ENCODE measurements at regions of chr11 and their contacts with region 1.

Region 1: GRCh38 chr11:57345555-57346211 is 7.5 kb downstream of the P2RX3 start:
- DNase-seq: peak; percentile 76
- H3K4me3 Mint-ChIP-seq: no peak overlapping the region
- H3K27ac Mint-ChIP-seq: no peak overlapping the region
- H3K4me1 Mint-ChIP-seq: peaks cover 2% of the 10 kb centered on the region
- H3K27me3 Mint-ChIP-seq: peaks cover 2% of the 10 kb centered on the region

Region 2: DNA sequence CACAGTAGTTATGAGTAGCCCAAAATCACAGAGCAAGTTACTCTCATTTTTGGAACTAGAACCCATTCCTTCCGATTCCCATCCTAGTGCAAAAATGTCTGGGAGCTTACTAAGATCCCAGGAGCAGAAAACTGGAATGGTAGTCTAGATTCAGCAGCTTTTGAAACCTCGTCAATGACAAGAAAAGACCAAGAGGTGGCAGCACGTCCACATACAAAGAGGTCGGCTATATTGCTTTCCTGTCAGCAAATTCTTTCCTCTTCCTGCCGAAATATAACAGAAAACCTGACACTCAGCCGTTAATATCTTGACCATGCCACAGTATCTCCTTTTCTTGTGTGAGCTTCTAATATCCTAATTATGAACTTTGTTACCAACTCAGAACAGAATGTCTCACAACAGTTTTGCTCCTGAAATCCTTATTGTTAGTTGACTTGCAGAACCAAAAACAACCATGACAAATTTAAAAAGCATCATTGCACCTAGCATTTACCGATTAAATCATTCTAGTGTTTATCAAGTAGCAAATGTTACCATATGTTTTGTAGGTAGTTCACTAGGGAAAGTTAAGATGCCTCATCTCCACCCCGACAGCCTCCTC is 504.4 kb before region 1 on chr11:
- CTCF ChIA-PET with region 1: interaction called, 4 read pairs
- POLR2A ChIA-PET with region 1: no interaction called
- intact Hi-C with region 1: loop called (anchors 10 kb)
- DNase-seq: peak; percentile 39
- H3K4me3 Mint-ChIP-seq: no peak overlapping the region
- H3K27ac Mint-ChIP-seq: no peak overlapping the region
- H3K4me1 Mint-ChIP-seq: peaks cover 2% of the 10 kb centered on the region
- H3K27me3 Mint-ChIP-seq: peaks cover 4% of the 10 kb centered on the region

Region 3: DNA sequence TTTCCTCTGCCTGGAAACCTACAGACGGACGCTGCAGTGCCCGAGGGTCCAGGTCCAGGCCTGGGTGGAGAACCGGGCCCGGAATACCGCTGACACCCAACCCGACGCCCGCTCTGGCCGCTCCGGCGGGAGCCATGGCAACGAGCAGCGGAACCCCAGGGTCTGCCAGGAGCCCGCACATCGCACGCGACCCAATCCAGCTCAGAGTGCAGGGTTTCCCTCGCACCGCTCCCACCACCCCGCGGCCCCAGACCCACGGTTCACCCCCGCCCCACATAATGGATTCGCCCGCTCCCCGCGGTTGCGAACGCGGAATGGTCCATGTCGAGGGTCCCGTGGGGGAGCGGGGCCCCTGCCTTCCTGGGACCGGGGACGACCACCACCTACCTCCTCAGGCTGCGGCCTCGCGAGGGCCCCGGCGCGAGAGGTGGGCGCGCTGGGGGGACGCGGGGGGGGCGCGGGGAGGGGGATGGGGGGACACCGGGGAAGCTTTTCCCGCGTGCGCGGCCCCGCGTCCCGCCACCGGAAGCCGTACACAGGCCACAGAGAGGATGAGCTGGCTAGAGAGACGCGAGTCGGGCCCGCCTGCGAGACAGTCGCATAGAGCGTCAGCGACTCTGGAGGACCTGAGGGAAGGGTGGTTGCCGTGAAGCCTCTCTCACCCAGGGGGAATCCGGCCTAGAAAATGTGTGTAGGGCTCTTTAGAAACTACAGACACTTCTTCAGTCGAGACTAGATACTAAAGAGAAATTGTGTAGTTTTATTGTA is 10.2 kb before region 1 on chr11 and contains the start of gene SSRP1:
- CTCF ChIA-PET with region 1: interaction called, 17 read pairs
- POLR2A ChIA-PET with region 1: no interaction called
- intact Hi-C with region 1: no loop called
- DNase-seq: peak; percentile 92
- H3K4me3 Mint-ChIP-seq: peak within 1 kb of the TSS; percentile 91
- H3K27ac Mint-ChIP-seq: peak within 1 kb of the TSS; percentile 98
- H3K4me1 Mint-ChIP-seq: peaks cover 47% of the 10 kb centered on the region
- H3K27me3 Mint-ChIP-seq: no peaks in the 10 kb centered on the region
- total RNA-seq, gene SSRP1: 256 to 262 TPM

Region 4: DNA sequence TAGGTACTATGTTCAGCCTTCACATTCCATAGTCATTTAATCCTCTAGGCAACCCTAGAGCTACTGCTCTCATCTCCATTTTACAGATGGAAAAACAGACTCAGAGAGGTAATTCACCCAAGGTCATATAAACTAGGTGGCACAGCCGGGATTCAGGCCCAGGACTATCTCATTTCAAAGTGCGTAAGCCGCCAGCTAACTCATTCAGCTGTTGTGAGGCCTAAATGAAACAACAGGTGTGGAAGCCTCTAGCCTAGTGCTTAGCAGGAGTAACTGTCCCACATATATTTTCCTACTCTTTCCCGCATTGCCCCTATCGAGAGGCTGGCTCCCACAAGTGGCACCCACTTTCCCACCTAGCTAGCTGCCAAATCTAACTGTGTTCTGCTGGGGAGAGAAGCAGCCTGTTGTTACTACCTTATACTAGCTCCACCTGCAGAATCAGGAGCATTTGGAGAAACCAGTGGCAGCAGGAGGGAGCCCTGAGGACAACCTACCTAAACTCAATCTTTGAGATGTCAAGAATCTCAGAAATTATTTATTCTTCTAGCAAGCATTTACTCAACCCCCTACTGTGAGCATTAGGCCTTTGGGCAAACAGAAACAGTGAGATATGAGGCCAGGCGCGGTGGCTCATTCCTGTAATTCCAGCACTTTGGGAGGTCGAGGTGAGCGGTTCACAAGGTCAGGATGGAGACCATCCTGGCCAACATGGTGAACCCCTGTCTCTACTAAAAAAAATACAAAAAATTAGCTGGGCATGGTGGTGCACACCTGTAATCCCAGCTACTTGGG is 14.4 kb after region 1 on chr11:
- CTCF ChIA-PET with region 1: interaction called, 11 read pairs
- POLR2A ChIA-PET with region 1: no interaction called
- intact Hi-C with region 1: no loop called
- DNase-seq: no peak
- H3K4me3 Mint-ChIP-seq: no peak overlapping the region
- H3K27ac Mint-ChIP-seq: no peak overlapping the region
- H3K4me1 Mint-ChIP-seq: no peaks in the 10 kb centered on the region
- H3K27me3 Mint-ChIP-seq: peaks cover 11% of the 10 kb centered on the region

Region 5: GRCh38 chr11:57480409-57481137 is 134.9 kb after region 1 on chr11:
- CTCF ChIA-PET with region 1: interaction called, 43 read pairs
- POLR2A ChIA-PET with region 1: no interaction called
- intact Hi-C with region 1: loop called (anchors 1 kb)
- DNase-seq: peak; percentile 87
- H3K4me3 Mint-ChIP-seq: no peak overlapping the region
- H3K27ac Mint-ChIP-seq: no peak overlapping the region
- H3K4me1 Mint-ChIP-seq: peaks cover 13% of the 10 kb centered on the region
- H3K27me3 Mint-ChIP-seq: peaks cover 17% of the 10 kb centered on the region

Region 6: DNA sequence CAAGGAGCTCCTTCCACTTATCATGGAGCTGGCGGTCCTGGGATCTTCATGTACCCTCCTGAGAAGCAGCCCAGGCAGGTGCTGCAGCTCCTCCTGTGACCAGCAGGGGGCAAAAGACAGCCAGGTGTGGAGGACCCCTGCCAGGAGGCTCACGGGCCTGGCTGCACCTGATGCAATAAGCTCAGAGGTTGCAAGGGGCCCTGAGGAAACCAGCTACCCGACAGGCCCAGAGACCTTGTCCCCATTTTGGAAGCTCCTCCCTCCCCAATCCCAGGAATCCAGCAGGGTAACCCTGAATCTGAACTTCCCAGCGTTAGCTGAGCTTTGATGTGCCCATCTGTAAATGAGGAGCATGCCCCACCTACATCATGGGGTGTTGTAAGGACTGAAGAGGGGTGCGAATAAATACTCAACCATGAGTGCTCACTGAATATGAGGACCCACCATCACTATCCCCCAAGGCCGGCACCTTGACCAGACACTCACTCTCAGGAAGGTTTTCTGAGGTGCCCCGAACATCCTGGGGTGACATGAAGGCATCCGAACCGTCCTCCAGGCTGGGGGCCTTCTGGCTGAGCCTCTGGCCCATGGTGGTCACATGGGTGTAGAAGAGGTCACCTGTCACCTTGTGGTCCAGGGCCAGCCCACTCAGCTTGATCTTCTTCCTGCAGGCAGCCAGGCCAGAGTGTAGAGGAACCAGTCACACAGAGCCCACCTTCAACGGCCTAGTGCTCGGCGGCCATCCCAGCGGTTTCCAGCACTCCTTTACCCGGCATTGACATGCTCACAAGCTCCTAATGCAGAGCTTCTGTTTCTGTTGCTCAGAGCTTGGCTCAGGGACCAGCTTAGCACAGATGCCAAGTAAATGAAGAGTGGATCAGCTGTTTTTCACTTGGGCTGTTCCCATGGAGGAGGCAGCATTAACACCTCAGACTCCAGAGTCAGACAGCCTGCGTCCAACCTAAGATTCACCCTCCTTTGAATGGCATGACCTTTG is 148.1 kb after region 1 on chr11:
- CTCF ChIA-PET with region 1: interaction called, 16 read pairs
- POLR2A ChIA-PET with region 1: no interaction called
- intact Hi-C with region 1: no loop called
- DNase-seq: peak; percentile 87
- H3K4me3 Mint-ChIP-seq: no peak overlapping the region
- H3K27ac Mint-ChIP-seq: peak overlapping the region; percentile 83
- H3K4me1 Mint-ChIP-seq: peaks cover 9% of the 10 kb centered on the region
- H3K27me3 Mint-ChIP-seq: no peaks in the 10 kb centered on the region